ENCODE measurements at regions of chr15 and their contacts with region 1.

Region 1: GRCh38 chr15:100879464-100880138 is at the start of gene ALDH1A3:
- DNase-seq: peak; percentile 81
- H3K4me3 ChIP-seq: peak within 1 kb of the TSS; percentile 63 to 95
- H3K27ac ChIP-seq: peak within 1 kb of the TSS; percentile 87 to 98
- H3K4me1 ChIP-seq: no peaks in the 10 kb centered on the region
- H3K27me3 ChIP-seq: no peaks in the 10 kb centered on the region
- CTCF ChIP-seq: peak in 1 of 4 experiments; percentile 15
- POLR2A ChIP-seq: peak; percentile 84
- total RNA-seq, gene ALDH1A3: 240 to 347 TPM

Region 2: DNA sequence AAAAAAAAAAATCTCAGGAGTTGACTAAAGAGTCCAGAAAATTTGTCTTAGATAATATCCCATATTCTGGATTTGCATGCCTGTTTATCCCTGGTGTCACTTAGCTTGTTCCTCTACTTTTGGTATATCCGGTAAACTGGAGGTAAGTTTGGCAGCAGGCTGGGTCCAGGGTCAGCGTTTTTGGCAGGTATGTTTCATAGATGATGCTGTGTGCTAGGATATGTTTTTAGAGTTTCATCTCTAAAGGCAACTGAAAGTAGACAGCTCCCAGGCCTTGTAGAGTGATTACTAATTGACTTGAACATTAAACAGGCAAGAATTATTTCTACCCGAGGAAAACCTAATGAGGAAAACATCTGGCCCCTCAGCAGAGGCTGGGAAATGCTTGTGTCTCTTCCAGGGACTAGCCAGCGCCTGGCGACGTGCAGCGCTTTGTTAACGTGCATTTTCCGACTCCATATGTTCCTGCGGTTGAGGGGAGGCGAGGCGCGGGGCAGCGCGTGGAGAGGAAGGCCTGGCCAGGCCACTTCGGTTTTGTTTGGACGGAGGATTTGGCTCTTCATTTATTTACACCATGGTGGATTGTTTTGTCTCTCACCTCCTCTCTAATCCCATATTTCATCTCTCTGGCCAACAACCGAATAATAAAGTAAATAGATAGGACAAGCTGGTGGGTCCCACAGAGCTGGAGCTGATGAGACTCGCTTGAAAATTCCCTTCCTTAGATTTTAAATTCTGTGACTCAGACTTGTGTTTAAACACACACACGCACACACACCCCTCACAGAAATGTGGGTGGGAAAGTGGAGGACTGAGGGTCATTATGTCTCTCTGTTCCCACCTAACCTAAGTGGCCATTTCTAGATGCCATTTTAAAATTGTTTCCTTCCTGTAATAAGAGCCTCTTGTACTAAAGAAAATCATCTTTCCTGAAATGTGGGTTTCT is 211.9 kb before region 1 on chr15:
- intact Hi-C with region 1: loop called (anchors 5 kb)
- DNase-seq: no peak
- H3K4me3 ChIP-seq: no peak overlapping the region
- H3K27ac ChIP-seq: no peak overlapping the region
- H3K4me1 ChIP-seq: no peaks in the 10 kb centered on the region
- H3K27me3 ChIP-seq: no peaks in the 10 kb centered on the region
- CTCF ChIP-seq: no peak
- POLR2A ChIP-seq: no peak

Region 3: GRCh38 chr15:101413239-101413638 is 533.6 kb after region 1 on chr15:
- intact Hi-C with region 1: no loop called
- DNase-seq: no peak
- H3K4me3 ChIP-seq: no peak overlapping the region
- H3K27ac ChIP-seq: no peak overlapping the region
- H3K4me1 ChIP-seq: no peaks in the 10 kb centered on the region
- H3K27me3 ChIP-seq: no peaks in the 10 kb centered on the region
- CTCF ChIP-seq: peak in 1 of 4 experiments; percentile 28
- POLR2A ChIP-seq: no peak

Measured in prostate gland (tissue), 2 donors.